ENCODE measurements at regions of chr7 and their contacts with region 1.

Region 1: GRCh38 chr7:23181684-23182553 is at the start of gene NUP42:
- DNase-seq: peak; percentile 98
- ATAC-seq: peak; percentile 97
- H3K4me3 ChIP-seq: peak within 1 kb of the TSS; percentile 71 to 78
- H3K27ac ChIP-seq: peak within 1 kb of the TSS; percentile 51 to 78
- H3K4me1 ChIP-seq: no peaks in the 10 kb centered on the region
- H3K27me3 ChIP-seq: no peaks in the 10 kb centered on the region
- total RNA-seq, gene NUP42: 27.1 to 34.9 TPM

Region 2: GRCh38 chr7:23105644-23106056 is 76.3 kb before region 1 on chr7 and contains the start of gene KLHL7:
- intact Hi-C with region 1: loop called (anchors 2 to 5 kb)
- DNase-seq: peak; percentile 98 to 99
- ATAC-seq: peak; percentile 99
- H3K4me3 ChIP-seq: peak within 1 kb of the TSS; percentile 74 to 88
- H3K27ac ChIP-seq: peak within 1 kb of the TSS in 1 of 2 donors; percentile 38
- H3K4me1 ChIP-seq: peaks cover 0 to 5% of the 10 kb centered on the region in 2 donors
- H3K27me3 ChIP-seq: no peaks in the 10 kb centered on the region
- total RNA-seq, gene KLHL7: 21.0 to 23.0 TPM

Region 3: GRCh38 chr7:23247603-23248335 is 65.8 kb after region 1 on chr7:
- intact Hi-C with region 1: loop called (anchors 5 kb)
- DNase-seq: peak; percentile 84 to 85
- ATAC-seq: peak; percentile 81
- H3K4me3 ChIP-seq: peak overlapping the region; percentile 15 to 48
- H3K27ac ChIP-seq: peak overlapping the region; percentile 61 to 68
- H3K4me1 ChIP-seq: peaks cover 0 to 3% of the 10 kb centered on the region in 2 donors
- H3K27me3 ChIP-seq: no peaks in the 10 kb centered on the region

Region 4: DNA sequence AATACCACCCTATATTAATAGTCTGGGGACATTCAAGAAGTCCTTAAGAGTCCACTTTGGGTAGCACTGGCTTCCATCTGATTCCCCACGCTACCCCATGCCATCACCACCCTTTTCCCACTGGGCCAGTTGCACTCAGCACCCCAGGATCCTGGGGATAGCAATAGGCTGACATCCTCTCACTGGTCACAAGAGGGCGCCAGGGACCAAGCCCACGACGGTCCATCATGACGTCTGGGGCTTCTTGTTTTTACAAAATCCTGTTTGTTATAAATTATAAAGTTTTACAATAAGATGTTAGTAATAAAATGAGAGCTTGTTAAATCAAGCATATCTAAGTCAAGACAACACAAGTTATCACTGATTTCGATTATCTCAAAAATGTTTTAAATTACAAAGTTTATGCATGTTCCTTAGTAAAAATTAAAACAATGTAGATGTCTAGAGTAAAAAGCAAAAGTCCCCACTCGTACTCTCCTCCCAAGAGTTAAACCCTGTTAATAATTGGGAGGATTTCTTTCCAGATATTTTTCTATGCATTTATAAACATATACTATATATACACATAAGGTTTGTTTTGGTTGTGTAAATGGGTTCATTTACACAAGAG is 80.0 kb after region 1 on chr7:
- intact Hi-C with region 1: loop called (anchors 5 kb)
- DNase-seq: peak; percentile 66 to 82
- ATAC-seq: peak; percentile 73
- H3K4me3 ChIP-seq: no peak overlapping the region
- H3K27ac ChIP-seq: no peak overlapping the region
- H3K4me1 ChIP-seq: no peaks in the 10 kb centered on the region
- H3K27me3 ChIP-seq: no peaks in the 10 kb centered on the region

Measured in aorta (tissue), 5 donors.